ENCODE measurements at regions of chr19 and their contacts with region 1.

Region 1: DNA sequence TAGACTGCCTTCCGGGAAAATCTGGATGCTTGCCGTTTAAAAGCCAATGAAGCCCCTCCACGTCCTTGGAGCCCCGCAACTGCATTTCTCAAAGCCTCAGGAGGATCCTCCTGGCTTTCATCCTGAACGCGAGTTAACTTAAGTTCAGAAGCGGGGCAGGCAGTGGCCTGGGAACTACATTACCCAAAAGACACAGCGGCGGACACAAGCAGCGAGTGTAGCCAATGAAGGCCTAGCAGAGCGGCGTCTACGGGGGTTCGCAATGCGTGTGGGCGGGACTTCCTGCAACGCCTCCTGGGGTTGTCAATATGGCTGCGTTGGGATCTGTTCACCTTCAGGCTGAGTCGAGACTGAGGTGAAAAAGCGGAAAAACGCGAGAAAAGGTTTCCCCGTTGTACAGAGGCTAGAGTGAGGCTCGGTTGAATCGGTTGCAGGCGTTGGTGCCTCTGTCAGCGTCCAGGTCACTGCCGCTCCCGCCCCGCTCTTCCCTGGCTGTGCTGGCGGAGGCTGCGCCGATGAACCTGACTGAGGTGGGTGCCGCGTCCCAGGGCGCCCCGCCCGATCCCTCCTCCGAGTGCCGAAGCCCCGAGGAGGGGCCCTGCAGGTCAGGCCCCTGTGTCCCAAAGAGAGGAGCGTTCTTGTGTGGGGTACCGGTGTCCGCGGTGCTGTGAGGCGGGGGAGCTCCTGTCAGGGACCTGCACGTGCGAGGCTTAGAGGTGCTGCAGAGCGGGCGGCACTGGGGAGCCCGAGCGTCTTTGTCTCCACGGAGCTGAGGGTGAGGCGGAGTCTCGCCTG is at the start of gene ZNF17:
- DNase-seq: peak; percentile 93 to 94
- H3K4me3 ChIP-seq: peak within 1 kb of the TSS; percentile 96
- H3K4me3 Mint-ChIP-seq: peak within 1 kb of the TSS; percentile 85
- H3K27ac Mint-ChIP-seq: peak within 1 kb of the TSS; percentile 42
- H3K4me1 ChIP-seq: no peaks in the 10 kb centered on the region
- H3K4me1 Mint-ChIP-seq: peaks cover 16% of the 10 kb centered on the region
- H3K27me3 ChIP-seq: no peaks in the 10 kb centered on the region
- H3K27me3 Mint-ChIP-seq: no peaks in the 10 kb centered on the region
- CTCF ChIP-seq: no peak
- total RNA-seq, gene ZNF17: 7.2 and 9.5 TPM in 2 replicates

Region 2: GRCh38 chr19:57362997-57363705 is 47.9 kb before region 1 on chr19 and contains the starts of genes TRAPPC2B and ZNF547:
- CTCF ChIA-PET with region 1: no interaction called
- POLR2A ChIA-PET with region 1: no interaction called
- intact Hi-C with region 1: loop called (anchors 1 kb)
- DNase-seq: peak; percentile 98 to 99
- H3K4me3 ChIP-seq: peak within 1 kb of the TSS; percentile 77
- H3K4me3 Mint-ChIP-seq: peak within 1 kb of the TSS; percentile 84
- H3K27ac Mint-ChIP-seq: peak within 1 kb of the TSS; percentile 95
- H3K4me1 ChIP-seq: peaks cover 3% of the 10 kb centered on the region; the same call in 1 of the 2 replicates
- H3K4me1 Mint-ChIP-seq: peaks cover 21% of the 10 kb centered on the region
- H3K27me3 ChIP-seq: no peaks in the 10 kb centered on the region
- H3K27me3 Mint-ChIP-seq: no peaks in the 10 kb centered on the region
- CTCF ChIP-seq: no peak
- total RNA-seq, gene TRAPPC2B: 7.0 and 8.6 TPM in 2 replicates
- total RNA-seq, gene ZNF547: 0.95 and 1.8 TPM in 2 replicates

Region 3: GRCh38 chr19:57477191-57478008 is 66.3 kb after region 1 on chr19 and contains the start of gene ZNF772:
- CTCF ChIA-PET with region 1: interaction called, 3 read pairs
- POLR2A ChIA-PET with region 1: no interaction called
- intact Hi-C with region 1: loop called (anchors 1 kb)
- DNase-seq: peak; percentile 82 to 87
- H3K4me3 ChIP-seq: peak within 1 kb of the TSS; percentile 25
- H3K4me3 Mint-ChIP-seq: peak within 1 kb of the TSS; percentile 75
- H3K27ac Mint-ChIP-seq: peak within 1 kb of the TSS; percentile 30
- H3K4me1 ChIP-seq: no peaks in the 10 kb centered on the region
- H3K4me1 Mint-ChIP-seq: no peaks in the 10 kb centered on the region
- H3K27me3 ChIP-seq: no peaks in the 10 kb centered on the region
- H3K27me3 Mint-ChIP-seq: no peaks in the 10 kb centered on the region
- CTCF ChIP-seq: peak; percentile 23 to 53
- total RNA-seq, gene ZNF772: 1.2 and 1.7 TPM in 2 replicates

Region 4: DNA sequence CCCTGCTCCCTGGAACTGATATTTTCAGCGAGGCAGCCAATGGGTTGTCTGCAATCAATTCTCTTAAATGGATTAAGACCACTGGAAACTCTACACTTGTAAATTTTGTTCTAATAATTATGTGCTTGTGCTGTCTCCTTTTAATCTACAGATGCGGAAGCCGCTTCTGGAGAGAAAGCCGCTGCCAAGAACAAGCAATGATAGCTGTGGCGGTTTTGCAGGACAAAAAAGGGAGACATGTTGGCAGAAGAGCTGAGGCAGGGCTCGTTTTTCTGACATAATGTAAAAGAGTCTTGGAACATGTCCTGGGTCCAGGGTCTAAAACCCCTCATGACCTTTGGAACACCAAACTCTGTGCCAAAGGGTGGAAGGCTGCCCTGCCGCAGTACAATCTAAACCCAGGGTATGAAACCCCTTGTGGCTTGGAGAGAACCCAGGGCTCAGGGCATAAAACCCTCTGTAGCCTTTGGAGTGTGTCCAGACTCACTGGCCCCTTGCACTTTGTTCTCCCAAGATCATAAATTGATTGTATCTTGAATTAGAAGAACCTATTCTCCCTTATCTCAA is 492.6 kb after region 1 on chr19:
- CTCF ChIA-PET with region 1: no interaction called
- POLR2A ChIA-PET with region 1: no interaction called
- intact Hi-C with region 1: loop called (anchors 1 kb)
- DNase-seq: no peak
- H3K4me3 ChIP-seq: no peak overlapping the region
- H3K4me3 Mint-ChIP-seq: no peak overlapping the region
- H3K27ac Mint-ChIP-seq: no peak overlapping the region
- H3K4me1 ChIP-seq: no peaks in the 10 kb centered on the region
- H3K4me1 Mint-ChIP-seq: no peaks in the 10 kb centered on the region
- H3K27me3 ChIP-seq: no peaks in the 10 kb centered on the region
- H3K27me3 Mint-ChIP-seq: no peaks in the 10 kb centered on the region
- CTCF ChIP-seq: no peak

Measured in Caco-2 (cell line).